A549 (cell line): ENCODE measurements at regions of chr6 and their contacts with region 1.

Region 1: DNA sequence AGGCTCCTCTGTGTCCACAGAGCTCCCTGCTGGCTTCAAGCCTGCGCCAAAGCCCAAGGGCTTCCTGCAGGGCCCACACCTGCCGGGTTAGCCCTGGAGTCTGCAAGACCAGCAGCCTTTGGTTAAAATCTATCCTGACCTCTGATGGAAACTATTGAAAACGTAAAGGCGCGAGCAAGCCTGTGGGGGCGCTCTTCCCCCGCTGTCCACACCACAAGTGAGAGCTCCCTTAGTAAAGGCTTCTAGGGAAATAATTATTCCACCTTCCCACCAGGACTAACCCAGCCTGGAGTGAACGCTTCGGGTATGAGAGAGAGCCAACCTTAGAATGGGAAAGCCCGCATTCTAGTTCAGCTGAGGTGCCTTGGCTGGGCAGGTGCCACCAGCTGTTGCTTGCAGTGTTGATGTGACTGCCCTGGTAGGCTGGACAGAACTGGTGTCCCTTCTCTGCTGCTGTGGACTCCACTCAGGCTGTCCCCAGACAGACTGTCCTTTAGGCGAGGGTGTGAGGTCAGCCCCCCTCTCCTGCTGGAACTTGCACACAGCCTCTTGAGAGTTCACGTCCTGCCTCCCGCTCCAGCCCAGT is 68.7 kb downstream of the SYTL3 start:
- DNase-seq: peak; percentile 40 to 54
- ATAC-seq: peak; percentile 71 to 85
- H3K4me3 ChIP-seq: no peak overlapping the region
- H3K27ac ChIP-seq: peak overlapping the region; percentile 64 to 67; a peak in 3 of 6 replicates
- H3K4me1 ChIP-seq: peaks cover 17% of the 10 kb centered on the region
- CTCF ChIP-seq: peak; percentile 45
- EP300 ChIP-seq: no peak
- POLR2A ChIP-seq: no peak
- RAD21 ChIP-seq: peak; percentile 59 to 72

Region 2: GRCh38 chr6:158072083-158072721 is 646.4 kb before region 1 on chr6:
- CTCF ChIA-PET with region 1: no interaction called
- POLR2A ChIA-PET with region 1: no interaction called
- DNase-seq: peak; percentile 58 to 72
- ATAC-seq: peak; percentile 63 to 79
- H3K4me3 ChIP-seq: no peak overlapping the region
- H3K27ac ChIP-seq: peak overlapping the region; percentile 67 to 81
- H3K4me1 ChIP-seq: peaks cover 39% of the 10 kb centered on the region
- CTCF ChIP-seq: peak; percentile 77
- EP300 ChIP-seq: no peak
- POLR2A ChIP-seq: no peak
- RAD21 ChIP-seq: peak; percentile 91 to 93

Region 3: GRCh38 chr6:158704181-158704822 is 14.3 kb before region 1 on chr6:
- CTCF ChIA-PET with region 1: interaction called, 26 read pairs
- POLR2A ChIA-PET with region 1: no interaction called
- DNase-seq: peak; percentile 65 to 75
- ATAC-seq: peak; percentile 86 to 95
- H3K4me3 ChIP-seq: peak overlapping the region; percentile 43
- H3K27ac ChIP-seq: peak overlapping the region; percentile 86 to 89
- H3K4me1 ChIP-seq: peaks cover 36% of the 10 kb centered on the region
- CTCF ChIP-seq: peak; percentile 83
- EP300 ChIP-seq: no peak
- POLR2A ChIP-seq: no peak
- RAD21 ChIP-seq: peak; percentile 83 to 94

Region 4: DNA sequence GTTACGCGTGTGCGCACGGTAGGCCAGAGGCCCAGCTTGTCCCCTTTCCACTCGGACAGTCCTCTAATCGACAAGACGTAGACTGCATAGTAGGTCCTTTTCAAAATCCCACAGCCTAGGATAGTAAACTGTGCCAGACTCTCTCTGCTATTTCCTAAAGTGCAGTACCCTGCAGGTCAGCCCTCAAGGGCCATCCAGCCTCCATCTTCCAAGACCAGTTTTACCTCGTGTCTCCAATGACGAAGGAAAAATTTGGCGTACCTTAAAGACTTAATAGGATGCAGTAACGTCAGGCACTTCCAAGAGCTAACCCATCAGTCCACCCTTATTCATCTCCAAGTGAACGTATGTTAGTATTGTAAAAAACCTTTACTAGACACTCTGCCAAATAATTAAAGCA is 13.9 kb after region 1 on chr6:
- CTCF ChIA-PET with region 1: interaction called, 18 read pairs
- POLR2A ChIA-PET with region 1: no interaction called
- DNase-seq: no peak
- ATAC-seq: no peak
- H3K4me3 ChIP-seq: no peak overlapping the region
- H3K27ac ChIP-seq: no peak overlapping the region
- H3K4me1 ChIP-seq: peaks cover 7% of the 10 kb centered on the region
- CTCF ChIP-seq: no peak
- EP300 ChIP-seq: no peak
- POLR2A ChIP-seq: no peak
- RAD21 ChIP-seq: no peak